ENCODE measurements at regions of chr22 and their contacts with region 1.

Region 1: GRCh38 chr22:33302049-33302545 is 243.9 kb upstream of the SYN3 start:
- DNase-seq: peak; percentile 57 to 88 (median 76)
- ATAC-seq: peak; percentile 97
- H3K4me3 ChIP-seq: no peak overlapping the region
- H3K27ac ChIP-seq: no peak overlapping the region
- H3K4me1 ChIP-seq: no peaks in the 10 kb centered on the region
- H3K27me3 ChIP-seq: no peaks in the 10 kb centered on the region
- CTCF ChIP-seq: peak; percentile 80 to 89

Region 2: DNA sequence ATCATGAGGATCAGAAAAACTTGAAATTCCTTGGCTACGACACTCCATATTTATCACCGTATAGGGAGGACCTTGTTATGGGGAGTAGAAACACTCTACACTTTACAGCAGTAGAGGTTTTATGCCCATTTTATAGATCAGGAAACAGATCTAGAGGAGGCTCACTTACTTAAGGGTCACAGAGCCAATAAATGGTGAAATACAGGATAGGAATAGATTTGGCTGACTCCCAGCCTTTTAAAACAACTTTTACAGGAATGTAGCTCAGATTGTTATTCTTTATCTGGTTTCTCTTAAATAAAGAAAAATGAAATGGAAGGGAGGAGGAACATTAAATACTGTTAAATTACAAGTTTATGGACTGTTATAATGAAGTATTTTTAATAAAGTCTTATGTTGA is 812.7 kb before region 1 on chr22:
- intact Hi-C with region 1: no loop called
- DNase-seq: no peak
- ATAC-seq: no peak
- H3K4me3 ChIP-seq: no peak overlapping the region
- H3K27ac ChIP-seq: no peak overlapping the region
- H3K4me1 ChIP-seq: peaks cover 0 to 6% of the 10 kb centered on the region in 2 donors
- H3K27me3 ChIP-seq: no peaks in the 10 kb centered on the region
- CTCF ChIP-seq: no peak

Region 3: GRCh38 chr22:33579448-33580093 is 277.5 kb after region 1 on chr22:
- intact Hi-C with region 1: loop called in 1 of 2 experiments (anchors 5 kb)
- DNase-seq: peak in 1 of 4 donors; percentile 51
- ATAC-seq: peak; percentile 97
- H3K4me3 ChIP-seq: no peak overlapping the region
- H3K27ac ChIP-seq: no peak overlapping the region
- H3K4me1 ChIP-seq: peaks cover 0 to 7% of the 10 kb centered on the region in 2 donors
- H3K27me3 ChIP-seq: no peaks in the 10 kb centered on the region
- CTCF ChIP-seq: peak; percentile 79 to 85

Measured in left lung (tissue), 14 donors.